ENCODE measurements at regions of chr6 and their contacts with region 1.

Region 1: GRCh38 chr6:12289933-12290820 is at the start of gene EDN1:
- DNase-seq: peak; percentile 85 to 99
- H3K4me3 ChIP-seq: peak within 1 kb of the TSS; percentile 72
- H3K27ac ChIP-seq: peak within 1 kb of the TSS; percentile 92
- H3K4me1 ChIP-seq: peaks cover 66% of the 10 kb centered on the region
- H3K27me3 ChIP-seq: no peaks in the 10 kb centered on the region
- CTCF ChIP-seq: peak; percentile 45; the same call in 1 of the 2 replicates
- total RNA-seq, gene EDN1: 3.3 and 5.9 TPM in 2 replicates

Region 2: GRCh38 chr6:11609315-11610071 is 680.7 kb before region 1 on chr6:
- CTCF ChIA-PET with region 1: interaction called, 5 read pairs
- POLR2A ChIA-PET with region 1: no interaction called
- intact Hi-C with region 1: loop called (anchors 5 kb)
- DNase-seq: peak; percentile 77 to 80
- H3K4me3 ChIP-seq: no peak overlapping the region
- H3K27ac ChIP-seq: no peak overlapping the region
- H3K4me1 ChIP-seq: peaks cover 24% of the 10 kb centered on the region
- H3K27me3 ChIP-seq: no peaks in the 10 kb centered on the region
- CTCF ChIP-seq: no peak

Region 3: DNA sequence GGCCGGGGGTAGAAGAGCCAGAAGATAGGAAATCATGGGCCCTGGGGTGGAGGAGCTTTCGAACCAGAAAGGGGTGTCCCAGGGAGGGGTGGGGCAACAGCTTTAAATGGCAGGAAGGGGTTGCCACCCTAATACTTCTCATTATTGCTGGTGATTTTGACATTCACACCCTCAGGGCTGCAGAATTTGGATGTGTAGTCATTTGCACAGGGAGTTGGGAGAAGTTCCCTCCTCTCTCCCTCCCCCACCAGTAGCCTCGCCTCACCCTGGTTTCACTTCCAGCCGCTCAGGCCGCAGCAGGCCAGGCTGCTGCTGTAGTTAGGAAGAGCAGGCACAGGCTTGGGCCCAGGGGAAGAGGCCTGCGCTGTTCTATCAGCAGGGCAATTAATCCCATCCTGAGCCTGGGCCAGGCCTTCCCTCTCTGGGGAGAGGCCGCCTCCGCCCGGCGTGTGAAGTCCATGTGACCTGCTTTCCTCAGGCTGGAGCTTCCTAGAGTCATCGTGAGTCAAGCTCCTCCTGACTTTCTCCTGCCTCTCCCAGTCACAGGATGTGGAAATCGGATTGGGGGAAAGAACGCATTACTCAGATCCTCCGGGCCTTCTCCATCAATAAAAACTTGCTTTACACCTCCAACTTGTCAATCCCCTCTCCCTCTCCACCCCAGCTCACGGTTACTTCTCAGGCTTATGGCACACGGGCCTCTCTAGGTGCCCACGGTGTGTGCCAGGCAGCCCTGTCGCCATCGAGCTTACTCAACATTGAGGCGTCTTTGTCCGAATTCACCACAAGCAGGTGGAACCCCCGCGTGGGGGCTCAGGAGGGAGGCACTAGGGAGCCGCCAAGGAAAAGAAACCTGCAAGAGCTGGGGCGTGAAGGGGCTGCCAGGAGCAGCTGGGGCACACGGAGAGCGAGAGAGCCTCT is 519.4 kb before region 1 on chr6:
- CTCF ChIA-PET with region 1: interaction called, 6 read pairs
- POLR2A ChIA-PET with region 1: no interaction called
- intact Hi-C with region 1: loop called (anchors 1 kb)
- DNase-seq: peak; percentile 81 to 100
- H3K4me3 ChIP-seq: peak overlapping the region; percentile 52
- H3K27ac ChIP-seq: peak overlapping the region; percentile 98
- H3K4me1 ChIP-seq: peaks cover 83% of the 10 kb centered on the region
- H3K27me3 ChIP-seq: no peaks in the 10 kb centered on the region
- CTCF ChIP-seq: no peak

Region 4: GRCh38 chr6:12150812-12151432 is 139.3 kb before region 1 on chr6:
- CTCF ChIA-PET with region 1: interaction called, 7 read pairs
- POLR2A ChIA-PET with region 1: no interaction called
- intact Hi-C with region 1: loop called (anchors 1 kb)
- DNase-seq: peak in 1 of 2 experiments; percentile 47
- H3K4me3 ChIP-seq: no peak overlapping the region
- H3K27ac ChIP-seq: no peak overlapping the region; the same call in 1 of the 2 replicates
- H3K4me1 ChIP-seq: peaks cover 30% of the 10 kb centered on the region
- H3K27me3 ChIP-seq: no peaks in the 10 kb centered on the region
- CTCF ChIP-seq: peak; percentile 81

Region 5: GRCh38 chr6:12266571-12266970 is 23.6 kb before region 1 on chr6:
- CTCF ChIA-PET with region 1: interaction called, 3 read pairs
- POLR2A ChIA-PET with region 1: no interaction called
- intact Hi-C with region 1: loop called (anchors 1 kb)
- DNase-seq: peak; percentile 24 to 70
- H3K4me3 ChIP-seq: no peak overlapping the region
- H3K27ac ChIP-seq: peak overlapping the region; percentile 93
- H3K4me1 ChIP-seq: peaks cover 28% of the 10 kb centered on the region
- H3K27me3 ChIP-seq: no peaks in the 10 kb centered on the region
- CTCF ChIP-seq: no peak

Region 6: DNA sequence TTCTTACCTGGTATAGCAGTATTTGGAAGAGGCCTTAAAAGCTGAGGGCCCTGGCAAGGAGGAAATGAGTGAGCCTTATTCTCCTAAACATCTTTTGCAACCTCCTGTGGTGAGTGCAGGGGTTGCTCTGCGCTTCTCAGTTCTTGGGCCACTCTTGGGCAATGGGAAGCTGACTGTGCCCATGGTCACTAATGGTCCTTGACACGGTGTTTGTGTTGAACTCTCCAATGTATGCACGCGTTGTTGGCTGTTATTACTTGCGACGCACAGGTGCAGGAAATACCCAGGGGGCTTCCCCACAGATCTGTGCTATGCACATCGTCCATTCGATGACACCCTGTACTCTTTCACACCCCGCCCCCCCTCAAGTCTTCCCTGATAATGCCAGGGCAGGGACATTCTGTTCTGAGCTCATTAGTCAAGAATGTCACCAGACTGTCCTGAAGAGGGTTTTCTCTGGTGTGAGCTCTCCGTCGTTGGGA is 79.6 kb after region 1 on chr6:
- CTCF ChIA-PET with region 1: interaction called, 8 read pairs
- POLR2A ChIA-PET with region 1: no interaction called
- intact Hi-C with region 1: loop called (anchors 5 kb)
- DNase-seq: peak; percentile 27 to 75
- H3K4me3 ChIP-seq: no peak overlapping the region
- H3K27ac ChIP-seq: no peak overlapping the region
- H3K4me1 ChIP-seq: peaks cover 16% of the 10 kb centered on the region
- H3K27me3 ChIP-seq: no peaks in the 10 kb centered on the region
- CTCF ChIP-seq: 0 out of 2 replicates have a peak, but pooled peaks have one; percentile 21

Region 7: DNA sequence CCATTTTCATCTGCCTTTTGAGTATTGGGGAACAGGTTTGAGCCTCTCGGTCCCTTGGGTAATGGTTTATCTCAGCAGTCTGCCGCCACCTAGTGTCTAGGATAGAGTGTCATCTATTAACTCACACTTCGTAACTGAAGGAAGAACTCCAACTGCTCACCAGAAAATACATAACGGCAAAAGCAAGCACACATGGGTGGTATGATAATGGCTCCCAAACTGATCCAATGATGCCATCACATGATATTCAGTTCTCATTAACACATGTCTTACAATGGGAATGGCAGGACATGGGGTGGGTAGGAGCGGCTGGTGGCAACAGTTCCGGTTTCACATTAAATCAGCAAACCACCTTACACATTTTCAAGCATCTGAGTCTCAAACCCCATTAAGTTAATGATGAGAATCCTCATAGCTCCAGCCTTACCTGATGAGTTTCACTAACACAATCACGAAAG is 315.7 kb after region 1 on chr6:
- CTCF ChIA-PET with region 1: interaction called, 9 read pairs
- POLR2A ChIA-PET with region 1: interaction called, 6 read pairs
- intact Hi-C with region 1: loop called (anchors 1 kb)
- DNase-seq: peak; percentile 53 to 79
- H3K4me3 ChIP-seq: no peak overlapping the region
- H3K27ac ChIP-seq: no peak overlapping the region
- H3K4me1 ChIP-seq: peaks cover 16% of the 10 kb centered on the region
- H3K27me3 ChIP-seq: no peaks in the 10 kb centered on the region
- CTCF ChIP-seq: peak; percentile 98

Region 8: GRCh38 chr6:13653296-13653695 is 1363.1 kb after region 1 on chr6:
- CTCF ChIA-PET with region 1: no interaction called
- POLR2A ChIA-PET with region 1: no interaction called
- intact Hi-C with region 1: no loop called
- DNase-seq: no peak
- H3K4me3 ChIP-seq: no peak overlapping the region
- H3K27ac ChIP-seq: no peak overlapping the region
- H3K4me1 ChIP-seq: peaks cover 14% of the 10 kb centered on the region
- H3K27me3 ChIP-seq: no peaks in the 10 kb centered on the region
- CTCF ChIP-seq: no peak

Measured in PC-9 (cell line).